Ascending aorta (tissue), 2 donors: ENCODE measurements at regions of chr13 and their contacts with region 1.

Region 1: GRCh38 chr13:48879854-48880253 is 95.9 kb upstream of the FNDC3A start:
- DNase-seq: no peak
- H3K4me3 ChIP-seq: no peak overlapping the region
- H3K27ac ChIP-seq: no peak overlapping the region
- H3K4me1 ChIP-seq: peaks cover 0 to 6% of the 10 kb centered on the region in 2 donors
- H3K27me3 ChIP-seq: no peaks in the 10 kb centered on the region
- CTCF ChIP-seq: no peak

Region 2: GRCh38 chr13:48542581-48543341 is 337.1 kb before region 1 on chr13:
- intact Hi-C with region 1: no loop called
- DNase-seq: peak in 1 of 2 donors; percentile 71
- H3K4me3 ChIP-seq: peak overlapping the region in 1 of 2 donors; percentile 18
- H3K27ac ChIP-seq: no peak overlapping the region
- H3K4me1 ChIP-seq: peaks cover 0 to 7% of the 10 kb centered on the region in 2 donors
- H3K27me3 ChIP-seq: no peaks in the 10 kb centered on the region
- CTCF ChIP-seq: no peak

Region 3: GRCh38 chr13:48769107-48769704 is 110.6 kb before region 1 on chr13:
- intact Hi-C with region 1: no loop called
- DNase-seq: peak in 1 of 2 donors; percentile 92
- H3K4me3 ChIP-seq: no peak overlapping the region
- H3K27ac ChIP-seq: no peak overlapping the region
- H3K4me1 ChIP-seq: no peaks in the 10 kb centered on the region
- H3K27me3 ChIP-seq: no peaks in the 10 kb centered on the region
- CTCF ChIP-seq: peak; percentile 91 to 99 (median 92)

Region 4: GRCh38 chr13:48954081-48954480 is 74.2 kb after region 1 on chr13:
- intact Hi-C with region 1: loop called (anchors 5 kb)
- DNase-seq: no peak
- H3K4me3 ChIP-seq: no peak overlapping the region
- H3K27ac ChIP-seq: peak overlapping the region; percentile 58 to 61
- H3K4me1 ChIP-seq: peaks cover 2 to 4% of the 10 kb centered on the region in 2 donors
- H3K27me3 ChIP-seq: no peaks in the 10 kb centered on the region
- CTCF ChIP-seq: no peak

Region 5: DNA sequence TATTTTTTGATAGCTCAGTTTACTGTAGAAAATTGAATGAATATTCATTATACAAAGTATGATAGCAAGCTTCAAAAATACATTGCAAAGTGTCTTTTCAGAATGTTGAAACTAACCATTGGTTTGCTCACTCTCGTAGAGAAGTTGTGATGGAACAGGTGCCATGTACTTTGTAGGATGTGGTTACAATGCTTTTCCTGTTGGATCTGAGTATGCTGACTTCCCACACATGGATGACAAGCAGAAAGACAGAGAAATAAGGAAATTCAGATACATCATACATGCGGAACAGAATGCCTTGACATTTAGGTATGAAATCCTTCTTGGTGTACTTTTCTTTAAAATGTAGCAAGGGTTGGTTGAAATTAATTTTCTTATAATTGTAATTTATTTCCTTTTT is 398.4 kb after region 1 on chr13:
- intact Hi-C with region 1: no loop called
- DNase-seq: no peak
- H3K4me3 ChIP-seq: no peak overlapping the region
- H3K27ac ChIP-seq: no peak overlapping the region
- H3K4me1 ChIP-seq: no peaks in the 10 kb centered on the region
- H3K27me3 ChIP-seq: no peaks in the 10 kb centered on the region
- CTCF ChIP-seq: no peak